Endothelial cell of umbilical vein (primary cell): ENCODE measurements at regions of chr9 and their contacts with region 1.

Region 1: DNA sequence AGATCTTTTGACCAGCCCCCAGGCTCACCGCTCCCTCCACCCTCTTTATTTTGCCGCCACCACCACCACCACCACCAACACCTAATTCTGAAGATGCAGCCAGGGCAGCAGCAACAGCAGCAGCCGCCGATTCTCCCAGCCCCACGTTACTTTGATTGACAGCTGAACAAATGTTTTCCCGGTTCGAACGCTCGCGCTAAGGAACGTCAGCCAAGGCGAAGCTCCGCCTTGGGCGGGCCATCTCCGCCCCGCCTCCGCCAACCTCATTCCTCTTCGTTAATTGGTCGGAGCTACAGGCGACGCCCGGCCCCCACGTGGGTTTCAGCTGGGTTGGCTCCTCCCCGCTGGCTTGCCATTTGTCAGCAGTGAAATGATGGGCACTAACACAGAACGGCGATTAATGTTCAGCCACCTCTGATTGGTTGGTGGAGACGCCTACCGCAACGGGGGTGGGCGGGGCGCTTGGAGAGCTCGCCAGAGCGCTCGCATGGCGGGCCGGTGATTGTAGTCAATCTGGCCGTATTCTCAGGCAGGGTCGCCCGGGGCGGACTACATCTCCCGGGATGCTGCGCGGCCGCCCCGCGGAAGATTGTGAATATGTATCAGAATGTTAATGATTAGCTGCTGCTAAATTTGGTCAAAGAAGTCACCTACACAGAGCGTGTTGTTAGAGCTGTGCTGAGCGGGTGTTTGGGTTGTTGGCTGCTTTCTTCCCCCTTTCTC is at the start of gene TLE4:
- DNase-seq: peak; percentile 100
- H3K4me3 ChIP-seq: peak within 1 kb of the TSS; percentile 89 to 96 (median 95)
- H3K27ac ChIP-seq: peak within 1 kb of the TSS; percentile 87
- H3K4me1 ChIP-seq: peaks cover 22% of the 10 kb centered on the region
- H3K27me3 ChIP-seq: peaks cover 2 to 8% of the 10 kb centered on the region in 2 experiments
- CTCF ChIP-seq: no peak
- POLR2A ChIP-seq: peak; percentile 97
- total RNA-seq, gene TLE4: 31.4 and 34.5 TPM in 2 replicates

Region 2: GRCh38 chr9:78871452-78872331 is 699.8 kb before region 1 on chr9:
- CTCF ChIA-PET with region 1: no interaction called
- POLR2A ChIA-PET with region 1: no interaction called
- dilution Hi-C with region 1: no loop called
- intact Hi-C with region 1: loop called (anchors 2 kb)
- DNase-seq: peak; percentile 89
- H3K4me3 ChIP-seq: no peak overlapping the region
- H3K27ac ChIP-seq: peak overlapping the region; percentile 83
- H3K4me1 ChIP-seq: peaks cover 17% of the 10 kb centered on the region
- H3K27me3 ChIP-seq: no peaks in the 10 kb centered on the region
- CTCF ChIP-seq: no peak
- POLR2A ChIP-seq: no peak

Region 3: DNA sequence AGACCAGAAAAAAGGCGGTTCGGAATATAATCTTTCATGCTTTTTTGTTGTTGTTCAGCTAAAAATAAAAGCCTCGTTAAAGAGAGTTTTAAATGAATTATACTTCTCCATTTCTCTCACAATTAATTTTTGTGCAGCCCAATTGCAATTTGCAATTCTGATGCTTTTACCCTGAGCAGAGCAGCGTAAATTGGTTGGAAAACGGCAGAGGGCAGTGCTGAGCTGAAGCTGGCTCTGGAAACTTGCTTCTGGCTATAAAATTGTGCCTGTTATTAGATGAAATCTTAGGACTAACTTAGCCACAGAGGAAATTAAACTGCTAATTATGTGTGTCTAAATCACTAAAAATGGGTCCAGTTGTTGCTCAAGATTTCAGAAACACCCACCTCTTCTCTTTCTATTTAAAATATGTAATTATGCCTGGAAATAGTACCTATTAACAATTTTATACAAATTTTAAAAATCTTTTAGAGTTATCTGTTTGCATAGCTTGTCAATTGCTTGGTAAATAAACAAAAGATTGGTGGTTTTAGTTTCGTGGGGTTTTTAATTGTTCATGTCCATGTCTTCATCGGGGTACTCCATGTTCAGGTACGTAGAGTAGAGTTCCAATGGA is 441.5 kb before region 1 on chr9:
- CTCF ChIA-PET with region 1: interaction called, 3 read pairs
- POLR2A ChIA-PET with region 1: no interaction called
- dilution Hi-C with region 1: no loop called
- intact Hi-C with region 1: loop called (anchors 5 kb)
- DNase-seq: peak; percentile 58
- H3K4me3 ChIP-seq: no peak overlapping the region
- H3K27ac ChIP-seq: no peak overlapping the region
- H3K4me1 ChIP-seq: no peaks in the 10 kb centered on the region
- H3K27me3 ChIP-seq: no peaks in the 10 kb centered on the region
- CTCF ChIP-seq: peak; percentile 80 to 86
- POLR2A ChIP-seq: no peak

Region 4: DNA sequence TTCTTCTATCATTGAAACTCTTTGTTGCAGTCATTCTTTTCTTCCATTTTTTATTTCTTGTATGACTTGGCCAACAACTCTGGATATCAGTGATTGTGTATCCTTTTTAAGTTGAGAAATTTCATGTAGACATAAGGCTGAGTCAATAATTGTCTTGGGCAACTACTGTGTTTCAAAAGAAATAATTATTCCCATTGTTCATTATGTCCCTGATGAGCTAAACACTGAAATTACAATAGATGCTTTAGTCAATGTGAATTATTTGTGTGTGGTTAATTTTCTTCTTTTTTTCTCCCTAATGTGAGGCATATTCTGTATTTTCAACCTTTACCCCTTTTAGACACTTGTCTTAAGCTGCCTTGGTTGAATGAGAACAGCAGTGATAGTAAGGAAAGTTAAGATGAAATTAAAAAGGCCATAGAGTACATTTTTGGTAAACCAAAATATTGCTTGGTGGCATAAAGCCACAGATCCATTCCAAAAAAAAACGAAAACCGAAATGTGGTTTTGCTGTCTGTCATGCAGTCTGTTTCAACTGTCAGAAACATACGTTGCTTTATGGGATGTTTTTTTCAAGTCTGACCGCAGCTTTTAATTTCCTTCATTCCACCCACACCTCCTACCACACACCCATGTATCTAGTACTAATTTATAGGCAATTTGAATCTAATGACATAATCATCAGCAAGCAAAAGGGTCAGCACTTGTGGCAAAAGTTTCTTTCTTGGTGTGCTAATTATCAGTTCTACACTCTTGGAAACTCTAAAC is 21.4 kb after region 1 on chr9:
- CTCF ChIA-PET with region 1: no interaction called
- POLR2A ChIA-PET with region 1: no interaction called
- dilution Hi-C with region 1: no loop called
- intact Hi-C with region 1: no loop called
- DNase-seq: no peak
- H3K4me3 ChIP-seq: no peak overlapping the region
- H3K27ac ChIP-seq: no peak overlapping the region
- H3K4me1 ChIP-seq: no peaks in the 10 kb centered on the region
- H3K27me3 ChIP-seq: no peaks in the 10 kb centered on the region
- CTCF ChIP-seq: no peak
- POLR2A ChIP-seq: no peak

Region 5: DNA sequence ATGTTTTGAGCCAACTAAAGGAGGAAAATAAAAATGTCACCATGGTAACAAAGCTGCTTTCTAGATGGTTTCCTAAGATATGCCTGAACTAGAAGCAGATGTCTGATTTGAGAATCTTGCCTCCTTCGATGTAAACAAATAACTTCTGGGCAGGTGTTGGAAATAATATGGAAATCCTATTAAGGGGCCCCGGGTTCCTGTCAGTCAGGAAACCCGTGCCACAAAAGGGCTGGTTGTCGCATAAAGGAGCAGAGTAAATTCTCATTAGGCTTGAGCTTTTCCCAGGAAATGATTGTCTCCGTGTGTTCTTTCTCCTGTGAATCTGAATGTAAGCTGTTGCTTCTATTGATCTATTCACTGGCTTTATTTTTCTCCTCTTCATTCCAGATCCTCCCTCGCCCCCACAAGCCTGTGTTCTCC is 91.1 kb after region 1 on chr9:
- CTCF ChIA-PET with region 1: interaction called, 4 read pairs
- POLR2A ChIA-PET with region 1: no interaction called
- dilution Hi-C with region 1: no loop called
- intact Hi-C with region 1: loop called (anchors 1 kb)
- DNase-seq: peak; percentile 90
- H3K4me3 ChIP-seq: no peak overlapping the region
- H3K27ac ChIP-seq: peak overlapping the region; percentile 39
- H3K4me1 ChIP-seq: peaks cover 11% of the 10 kb centered on the region
- H3K27me3 ChIP-seq: no peaks in the 10 kb centered on the region
- CTCF ChIP-seq: no peak
- POLR2A ChIP-seq: no peak

Region 6: DNA sequence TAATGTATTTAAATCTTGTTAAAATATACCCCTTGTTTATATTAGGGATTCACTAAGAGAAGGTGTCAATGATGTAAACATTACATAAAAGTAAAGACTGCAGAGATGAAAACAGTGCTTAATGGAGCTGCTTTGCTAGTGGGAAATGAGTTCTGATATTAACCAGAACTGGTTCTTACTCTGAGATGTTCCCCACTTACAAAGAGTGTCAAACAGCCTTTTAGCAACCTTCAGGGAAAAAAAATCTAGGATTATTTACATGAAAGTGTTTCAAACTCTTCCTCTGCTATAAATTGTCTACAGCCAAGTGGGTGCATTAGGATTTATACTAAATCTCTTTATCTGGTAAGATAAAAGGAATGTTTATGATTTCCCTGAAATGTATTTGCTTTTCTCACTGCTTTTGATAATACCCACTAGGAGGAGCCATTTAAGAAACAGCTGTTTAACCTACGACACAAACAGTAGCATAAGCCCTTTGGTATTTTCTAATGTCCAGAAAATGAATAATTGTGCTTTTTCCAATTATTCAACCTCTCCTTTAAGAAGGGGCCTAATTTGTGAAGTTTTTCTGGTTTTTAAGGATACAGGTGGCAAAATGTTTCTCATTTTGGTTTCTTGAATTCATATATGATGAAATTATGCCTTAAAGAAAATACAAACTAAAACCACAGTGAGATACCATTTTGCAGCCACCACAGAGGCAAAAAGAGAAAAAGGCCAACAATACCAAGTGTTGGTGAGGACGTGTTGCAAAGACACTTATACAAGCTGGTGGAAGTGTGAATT is 186.6 kb after region 1 on chr9:
- CTCF ChIA-PET with region 1: interaction called, 3 read pairs
- POLR2A ChIA-PET with region 1: no interaction called
- dilution Hi-C with region 1: no loop called
- intact Hi-C with region 1: loop called (anchors 2 kb)
- DNase-seq: peak; percentile 31
- H3K4me3 ChIP-seq: no peak overlapping the region
- H3K27ac ChIP-seq: no peak overlapping the region
- H3K4me1 ChIP-seq: no peaks in the 10 kb centered on the region
- H3K27me3 ChIP-seq: no peaks in the 10 kb centered on the region
- CTCF ChIP-seq: peak; percentile 18 to 39
- POLR2A ChIP-seq: no peak

Region 7: GRCh38 chr9:80156756-80157472 is 585.4 kb after region 1 on chr9:
- CTCF ChIA-PET with region 1: no interaction called
- POLR2A ChIA-PET with region 1: no interaction called
- dilution Hi-C with region 1: no loop called
- intact Hi-C with region 1: loop called (anchors 1 kb)
- DNase-seq: no peak
- H3K4me3 ChIP-seq: no peak overlapping the region
- H3K27ac ChIP-seq: no peak overlapping the region
- H3K4me1 ChIP-seq: peaks cover 18% of the 10 kb centered on the region
- H3K27me3 ChIP-seq: no peaks in the 10 kb centered on the region
- CTCF ChIP-seq: no peak
- POLR2A ChIP-seq: no peak